Tibial artery (tissue), 4 donors: ENCODE measurements at regions of chr4 and their contacts with region 1.

Region 1: GRCh38 chr4:87624698-87625097 is 16.4 kb downstream of the DSPP start:
- DNase-seq: no peak
- H3K4me3 ChIP-seq: no peak overlapping the region
- H3K27ac ChIP-seq: no peak overlapping the region
- H3K4me1 ChIP-seq: peaks cover 4 to 31% (median 14%) of the 10 kb centered on the region in 4 donors
- H3K27me3 ChIP-seq: no peaks in the 10 kb centered on the region
- CTCF ChIP-seq: no peak

Region 2: DNA sequence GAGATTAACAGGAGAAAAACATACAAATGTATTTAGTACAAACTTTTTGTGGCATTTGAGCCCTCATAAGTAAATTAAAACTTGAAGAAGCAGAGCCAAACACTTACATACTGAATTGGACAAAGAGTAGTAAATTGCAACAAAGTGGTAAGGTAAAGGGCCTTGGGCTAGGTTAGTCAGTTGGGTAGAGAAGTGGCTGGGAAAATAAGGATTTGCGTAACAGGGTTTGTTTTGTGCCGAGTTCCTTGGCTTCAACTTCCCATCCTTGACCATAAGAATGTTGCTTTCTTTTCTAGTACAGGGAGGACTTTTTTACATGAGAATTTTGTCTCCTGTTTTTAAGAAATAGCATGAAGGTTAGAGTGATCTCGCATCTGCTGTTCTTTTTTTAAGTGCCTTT is 49.7 kb before region 1 on chr4:
- intact Hi-C with region 1: loop called (anchors 10 kb)
- DNase-seq: no peak
- H3K4me3 ChIP-seq: no peak overlapping the region
- H3K27ac ChIP-seq: peak overlapping the region in 1 of 2 donors; percentile 16
- H3K4me1 ChIP-seq: peaks cover 0 to 9% (median 0%) of the 10 kb centered on the region in 4 donors
- H3K27me3 ChIP-seq: no peaks in the 10 kb centered on the region
- CTCF ChIP-seq: no peak

Region 3: DNA sequence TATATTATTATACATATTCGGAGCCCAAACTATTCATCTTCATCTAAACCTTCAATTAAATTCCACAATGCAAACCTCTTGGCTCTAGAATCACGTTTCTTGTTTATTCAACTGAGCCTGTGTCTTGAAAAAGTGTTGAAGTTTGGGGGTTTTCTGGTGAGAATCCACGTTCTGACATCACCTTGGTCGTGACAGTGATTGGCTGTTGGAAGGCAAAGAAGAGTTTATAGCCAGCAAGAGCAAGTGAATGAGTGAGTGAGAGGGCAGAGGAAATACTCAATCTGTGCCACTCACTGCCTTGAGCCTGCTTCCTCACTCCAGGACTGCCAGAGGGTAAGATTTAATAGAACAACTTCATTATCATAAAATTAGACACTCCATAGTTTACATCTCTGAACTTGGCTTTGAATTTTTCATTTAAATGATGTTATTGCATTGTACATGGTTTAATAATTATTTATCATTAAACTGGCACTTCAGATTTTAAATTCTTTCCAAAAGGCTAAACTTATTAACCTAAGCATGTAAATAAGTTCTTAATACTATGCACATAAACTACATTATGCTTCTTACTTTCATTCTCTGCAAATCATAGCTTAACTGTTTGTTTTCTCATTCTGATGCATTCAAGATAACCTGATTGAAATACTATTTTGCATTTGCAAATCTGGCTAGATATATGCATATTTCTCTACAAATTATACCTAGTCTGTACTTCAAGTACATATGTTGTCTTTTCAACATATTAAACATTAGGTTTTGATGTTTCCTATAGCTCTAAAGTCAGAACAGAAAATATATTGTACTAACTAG is 174.8 kb after region 1 on chr4 and contains the start of gene IBSP:
- intact Hi-C with region 1: no loop called
- DNase-seq: no peak
- H3K4me3 ChIP-seq: no peak within 1 kb of the TSS
- H3K27ac ChIP-seq: no peak within 1 kb of the TSS
- H3K4me1 ChIP-seq: no peaks in the 10 kb centered on the region
- H3K27me3 ChIP-seq: no peaks in the 10 kb centered on the region
- CTCF ChIP-seq: no peak